Activated CD8-positive, alpha-beta memory T cell treated with anti-CD3 and anti-CD28 coated beads, Interleukin-2, amount 10 ng/mL, durations not matched to agents 7 days and 5 days (primary cell): ENCODE measurements at regions of chr1 and their contacts with region 1.

Region 1: DNA sequence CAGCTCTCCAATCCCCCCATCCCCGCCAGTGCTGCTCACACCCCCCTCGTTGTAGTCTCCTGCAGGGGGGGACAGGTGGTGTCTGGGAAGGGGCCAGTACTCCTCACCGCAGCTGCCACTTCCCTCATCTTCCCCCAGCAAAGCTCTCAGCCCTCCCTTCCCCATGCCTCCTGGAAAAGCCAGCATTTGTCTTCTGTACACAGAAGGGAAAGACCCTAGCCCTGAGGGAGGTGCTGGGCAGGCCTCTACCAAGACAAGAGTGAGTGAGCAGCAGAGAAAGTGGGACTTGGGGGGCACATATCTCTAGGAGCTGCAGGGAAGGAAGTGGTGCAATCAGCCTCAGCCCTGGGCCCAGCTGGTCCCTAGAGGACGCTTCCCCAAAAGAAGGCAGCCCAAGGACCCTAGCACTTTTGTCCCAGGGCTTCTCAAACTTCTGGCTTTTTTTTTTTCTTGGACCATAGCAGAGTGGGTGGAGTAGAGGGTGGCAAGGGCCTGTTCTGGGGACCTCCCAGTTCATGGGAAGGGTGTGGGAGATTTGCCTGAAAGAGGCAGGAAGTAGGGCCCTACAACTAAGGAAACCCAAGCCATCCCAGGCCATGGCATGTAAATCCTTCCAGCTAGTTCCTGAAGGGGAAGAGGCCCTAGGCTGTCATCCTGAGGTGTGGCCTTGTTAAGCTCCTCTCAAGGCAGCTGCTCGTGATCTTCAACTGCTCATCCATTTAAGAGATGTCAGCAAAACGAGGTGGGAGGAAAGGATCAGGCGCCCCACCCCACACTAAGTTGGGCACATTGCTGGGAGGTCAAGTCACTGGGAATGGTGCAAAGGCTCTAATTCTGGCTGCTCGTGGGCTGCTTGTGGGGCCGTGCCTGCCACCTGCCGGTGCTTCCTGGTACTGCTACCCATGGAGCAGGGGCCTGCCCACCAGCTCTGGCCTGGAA is 12.6 kb downstream of the ZC3H12A start:
- DNase-seq: peak; percentile 82
- ATAC-seq: peak; percentile 63
- H3K4me3 Mint-ChIP-seq: no peak overlapping the region
- H3K27ac Mint-ChIP-seq: peak overlapping the region; percentile 65
- H3K4me1 Mint-ChIP-seq: peaks cover 15% of the 10 kb centered on the region
- H3K27me3 Mint-ChIP-seq: no peaks in the 10 kb centered on the region

Region 2: GRCh38 chr1:37458528-37458927 is 28.4 kb before region 1 on chr1:
- CTCF ChIA-PET with region 1: interaction called, 195 read pairs
- DNase-seq: no peak
- ATAC-seq: no peak
- H3K4me3 Mint-ChIP-seq: no peak overlapping the region
- H3K27ac Mint-ChIP-seq: no peak overlapping the region
- H3K4me1 Mint-ChIP-seq: peaks cover 7% of the 10 kb centered on the region
- H3K27me3 Mint-ChIP-seq: no peaks in the 10 kb centered on the region

Region 3: DNA sequence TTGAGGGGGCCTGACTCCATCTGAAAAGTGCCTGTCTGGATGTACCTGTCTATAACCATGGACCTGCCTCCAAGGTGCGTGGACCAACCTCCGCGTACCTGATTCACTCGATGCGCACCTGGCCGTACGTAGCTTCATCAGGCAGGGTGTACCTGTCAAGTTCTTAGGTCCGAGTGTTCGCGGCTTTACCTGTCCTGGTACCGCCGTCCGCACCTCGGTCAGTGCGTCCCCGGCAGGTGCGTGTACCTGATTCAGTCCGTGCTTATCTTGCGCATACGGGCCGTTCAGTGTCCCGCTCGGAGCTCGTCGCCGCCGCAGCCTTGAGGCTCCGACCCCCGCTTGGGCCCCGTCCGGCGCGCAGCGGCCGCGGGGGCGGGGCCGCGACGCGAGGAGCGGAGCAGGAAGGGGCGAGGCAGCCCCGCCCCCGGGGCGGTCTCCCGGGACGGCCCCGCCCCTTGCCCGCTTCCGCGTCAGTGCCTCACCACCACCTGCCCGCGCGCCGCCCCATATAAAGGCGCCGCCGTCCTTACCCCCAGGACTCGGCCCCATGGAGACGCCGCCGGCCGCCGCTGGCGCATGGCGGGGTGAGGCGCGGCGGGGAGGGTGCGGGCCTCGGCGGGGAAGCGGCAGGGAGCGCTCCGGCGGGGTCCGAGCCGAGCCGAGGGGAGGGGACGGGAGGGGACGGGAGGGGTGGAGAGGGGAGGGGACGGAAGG is 12.7 kb before region 1 on chr1 and contains the start of gene ZC3H12A:
- CTCF ChIA-PET with region 1: interaction called, 157 read pairs
- DNase-seq: peak; percentile 92
- ATAC-seq: peak; percentile 72
- H3K4me3 Mint-ChIP-seq: peak within 1 kb of the TSS; percentile 96
- H3K27ac Mint-ChIP-seq: peak within 1 kb of the TSS; percentile 90
- H3K4me1 Mint-ChIP-seq: peaks cover 50% of the 10 kb centered on the region
- H3K27me3 Mint-ChIP-seq: no peaks in the 10 kb centered on the region
- total RNA-seq, gene ZC3H12A: 20.9 to 35.4 TPM

Region 4: GRCh38 chr1:37509181-37509580 is 22.2 kb after region 1 on chr1:
- CTCF ChIA-PET with region 1: interaction called, 19 read pairs
- DNase-seq: no peak
- ATAC-seq: no peak
- H3K4me3 Mint-ChIP-seq: no peak overlapping the region
- H3K27ac Mint-ChIP-seq: peak overlapping the region; percentile 12
- H3K4me1 Mint-ChIP-seq: peaks cover 37% of the 10 kb centered on the region
- H3K27me3 Mint-ChIP-seq: no peaks in the 10 kb centered on the region